CD8-positive, alpha-beta T cell (primary cell): ENCODE measurements at regions of chr9 and their contacts with region 1.

Region 1: DNA sequence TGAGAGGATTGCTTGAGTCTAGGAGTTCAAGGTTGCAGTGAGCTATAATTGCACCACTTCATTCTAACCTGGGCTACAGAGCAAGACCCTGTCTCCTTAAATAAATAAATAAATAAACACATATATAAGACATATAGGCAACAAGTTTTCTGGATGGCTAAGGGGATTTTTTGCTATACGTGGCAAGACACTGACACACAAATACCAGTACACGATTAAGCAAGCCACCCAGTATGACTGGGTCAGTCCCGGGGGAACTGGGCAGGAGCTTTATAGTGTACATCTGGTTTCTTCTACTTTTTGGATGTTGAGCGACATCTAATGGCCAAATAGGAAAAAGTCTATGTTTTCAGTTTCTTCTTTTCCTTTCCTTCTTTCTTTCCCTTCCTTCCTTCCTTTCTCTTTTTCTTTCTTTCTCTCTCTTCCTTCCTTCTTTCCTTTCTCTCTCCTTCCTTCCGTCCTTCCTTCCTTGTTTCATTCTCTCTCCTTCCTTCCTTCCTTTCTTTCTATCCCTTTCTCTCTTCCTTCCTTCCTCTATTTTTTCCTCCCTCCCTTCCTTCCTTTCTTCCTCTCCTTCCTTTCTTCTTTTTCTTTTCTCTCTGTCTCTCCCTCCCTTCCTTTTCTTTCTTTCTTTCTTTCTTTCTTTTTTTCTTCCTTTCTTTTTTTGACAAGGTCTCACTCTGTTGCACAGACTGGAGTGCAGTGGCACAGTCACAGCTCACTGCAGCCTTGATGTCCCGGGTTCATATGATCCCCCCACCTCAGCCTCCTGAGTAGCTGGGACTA is 47.0 kb upstream of the PLIN2 start:
- DNase-seq: peak in 6 of 9 experiments; percentile 8 to 71 (median 46)
- ATAC-seq: peak; percentile 75
- H3K4me3 ChIP-seq: no peak overlapping the region
- H3K4me3 Mint-ChIP-seq: no peak overlapping the region
- H3K27ac ChIP-seq: no peak overlapping the region
- H3K27ac Mint-ChIP-seq: no peak overlapping the region
- H3K4me1 ChIP-seq: peaks cover 25% of the 10 kb centered on the region
- H3K4me1 Mint-ChIP-seq: peaks cover 30% of the 10 kb centered on the region
- H3K27me3 ChIP-seq: no peaks in the 10 kb centered on the region
- H3K27me3 Mint-ChIP-seq: no peaks in the 10 kb centered on the region
- CTCF ChIP-seq: peak; percentile 80

Region 2: GRCh38 chr9:18601956-18602355 is 572.4 kb before region 1 on chr9:
- CTCF ChIA-PET with region 1: no interaction called
- POLR2A ChIA-PET with region 1: no interaction called
- intact Hi-C with region 1: no loop called
- DNase-seq: no peak
- ATAC-seq: no peak
- H3K4me3 ChIP-seq: no peak overlapping the region
- H3K4me3 Mint-ChIP-seq: no peak overlapping the region
- H3K27ac ChIP-seq: no peak overlapping the region
- H3K27ac Mint-ChIP-seq: no peak overlapping the region
- H3K4me1 ChIP-seq: no peaks in the 10 kb centered on the region
- H3K4me1 Mint-ChIP-seq: no peaks in the 10 kb centered on the region
- H3K27me3 ChIP-seq: no peaks in the 10 kb centered on the region
- H3K27me3 Mint-ChIP-seq: no peaks in the 10 kb centered on the region
- CTCF ChIP-seq: no peak

Region 3: GRCh38 chr9:18632632-18633403 is 541.5 kb before region 1 on chr9:
- CTCF ChIA-PET with region 1: no interaction called
- POLR2A ChIA-PET with region 1: no interaction called
- intact Hi-C with region 1: no loop called
- DNase-seq: no peak
- ATAC-seq: no peak
- H3K4me3 ChIP-seq: no peak overlapping the region
- H3K4me3 Mint-ChIP-seq: no peak overlapping the region
- H3K27ac ChIP-seq: no peak overlapping the region
- H3K27ac Mint-ChIP-seq: no peak overlapping the region
- H3K4me1 ChIP-seq: no peaks in the 10 kb centered on the region
- H3K4me1 Mint-ChIP-seq: no peaks in the 10 kb centered on the region
- H3K27me3 ChIP-seq: no peaks in the 10 kb centered on the region
- H3K27me3 Mint-ChIP-seq: peaks cover 4% of the 10 kb centered on the region
- CTCF ChIP-seq: no peak

Region 4: DNA sequence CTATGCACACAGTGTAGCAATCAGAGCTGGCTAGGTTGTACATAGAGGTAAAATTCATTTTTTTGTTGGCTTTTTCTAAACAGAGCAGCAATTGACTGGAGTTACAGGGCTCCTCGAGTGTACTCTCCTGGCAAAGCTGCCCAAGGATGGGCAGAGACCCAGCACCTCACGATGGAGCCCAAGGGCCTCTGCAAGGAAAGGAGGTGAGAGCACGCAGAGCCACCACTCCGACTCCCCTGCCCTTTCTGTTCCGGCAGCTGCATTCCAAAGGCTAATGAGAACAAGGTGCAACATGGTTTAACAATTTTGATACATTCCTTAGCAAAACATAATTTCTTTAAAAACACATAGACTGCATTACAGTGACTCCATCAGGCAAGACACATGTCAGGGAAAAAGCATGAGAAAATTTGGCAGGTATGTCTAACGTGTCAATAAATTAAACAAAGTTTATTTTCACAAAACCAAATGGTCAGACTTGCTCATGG is 188.8 kb before region 1 on chr9:
- CTCF ChIA-PET with region 1: no interaction called
- POLR2A ChIA-PET with region 1: no interaction called
- intact Hi-C with region 1: no loop called
- DNase-seq: no peak
- ATAC-seq: no peak
- H3K4me3 ChIP-seq: no peak overlapping the region
- H3K4me3 Mint-ChIP-seq: no peak overlapping the region
- H3K27ac ChIP-seq: no peak overlapping the region
- H3K27ac Mint-ChIP-seq: no peak overlapping the region
- H3K4me1 ChIP-seq: no peaks in the 10 kb centered on the region
- H3K4me1 Mint-ChIP-seq: no peaks in the 10 kb centered on the region
- H3K27me3 ChIP-seq: no peaks in the 10 kb centered on the region
- H3K27me3 Mint-ChIP-seq: no peaks in the 10 kb centered on the region
- CTCF ChIP-seq: no peak

Region 5: GRCh38 chr9:19048966-19049916 is 125.1 kb before region 1 on chr9 and contains the start of gene RRAGA:
- CTCF ChIA-PET with region 1: interaction called, 14 read pairs
- POLR2A ChIA-PET with region 1: interaction called, 5 read pairs
- intact Hi-C with region 1: loop called in 1 of 2 experiments (anchors 1 kb)
- DNase-seq: peak; percentile 88 to 97 (median 93)
- ATAC-seq: peak; percentile 88
- H3K4me3 ChIP-seq: peak within 1 kb of the TSS; percentile 69 to 89
- H3K4me3 Mint-ChIP-seq: peak within 1 kb of the TSS; percentile 95
- H3K27ac ChIP-seq: peak within 1 kb of the TSS; percentile 80 to 96
- H3K27ac Mint-ChIP-seq: peak within 1 kb of the TSS; percentile 97
- H3K4me1 ChIP-seq: peaks cover 19% of the 10 kb centered on the region
- H3K4me1 Mint-ChIP-seq: peaks cover 40% of the 10 kb centered on the region
- H3K27me3 ChIP-seq: no peaks in the 10 kb centered on the region
- H3K27me3 Mint-ChIP-seq: no peaks in the 10 kb centered on the region
- CTCF ChIP-seq: peak; percentile 56
- total RNA-seq, gene RRAGA: 36.0 to 38.0 TPM

Region 6: GRCh38 chr9:19102631-19103345 is 71.5 kb before region 1 on chr9 and contains the start of gene HAUS6:
- CTCF ChIA-PET with region 1: interaction called, 19 read pairs
- POLR2A ChIA-PET with region 1: no interaction called
- intact Hi-C with region 1: loop called (anchors 1 to 5 kb)
- DNase-seq: peak; percentile 73 to 98 (median 92)
- ATAC-seq: peak; percentile 92
- H3K4me3 ChIP-seq: peak within 1 kb of the TSS; percentile 51 to 71
- H3K4me3 Mint-ChIP-seq: peak within 1 kb of the TSS; percentile 96
- H3K27ac ChIP-seq: peak within 1 kb of the TSS; percentile 58 to 83
- H3K27ac Mint-ChIP-seq: peak within 1 kb of the TSS; percentile 94
- H3K4me1 ChIP-seq: peaks cover 19% of the 10 kb centered on the region
- H3K4me1 Mint-ChIP-seq: peaks cover 29% of the 10 kb centered on the region
- H3K27me3 ChIP-seq: no peaks in the 10 kb centered on the region
- H3K27me3 Mint-ChIP-seq: no peaks in the 10 kb centered on the region
- CTCF ChIP-seq: no peak
- total RNA-seq, gene HAUS6: 14.2 to 16.5 TPM

Region 7: DNA sequence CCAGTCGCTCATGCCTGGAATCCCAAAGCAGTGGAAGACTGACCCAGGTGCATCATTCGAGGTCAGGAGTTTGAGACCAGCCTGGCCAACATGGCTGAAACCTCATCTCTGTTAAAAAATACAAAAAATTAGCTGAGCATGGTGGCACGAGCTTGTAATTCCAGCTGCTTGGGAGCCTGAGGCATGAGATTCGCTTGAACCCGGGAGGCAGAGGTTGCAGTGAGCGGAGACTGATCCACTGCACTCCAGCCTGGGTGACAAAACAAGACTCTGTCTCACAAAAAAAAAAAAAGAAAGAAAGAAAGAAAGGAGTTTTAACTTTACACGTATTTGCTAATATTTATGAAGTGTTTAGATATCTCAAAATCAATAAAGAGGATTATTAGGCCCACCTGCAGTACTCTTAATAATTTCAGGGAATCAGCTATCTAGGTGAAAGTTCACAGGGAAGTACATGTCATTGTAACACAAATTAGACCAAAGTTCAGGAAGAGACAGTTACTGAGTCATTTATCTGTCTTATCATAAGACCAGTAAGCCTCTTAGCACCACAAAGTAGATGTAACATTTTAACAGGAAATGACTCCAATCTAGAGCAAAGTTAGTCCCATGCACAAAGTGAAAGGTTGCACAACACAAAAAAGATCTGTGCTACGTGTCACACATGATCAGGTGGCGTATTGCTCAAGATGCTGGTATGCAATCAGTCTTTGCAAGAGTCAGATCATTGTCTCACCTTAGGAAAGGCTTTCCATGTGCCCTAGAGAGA is 12.9 kb before region 1 on chr9:
- CTCF ChIA-PET with region 1: interaction called, 32 read pairs
- POLR2A ChIA-PET with region 1: no interaction called
- intact Hi-C with region 1: no loop called
- DNase-seq: peak in 7 of 9 experiments; percentile 22 to 85 (median 46)
- ATAC-seq: peak; percentile 96
- H3K4me3 ChIP-seq: no peak overlapping the region
- H3K4me3 Mint-ChIP-seq: peak overlapping the region; percentile 40
- H3K27ac ChIP-seq: peak overlapping the region; percentile 29 to 95
- H3K27ac Mint-ChIP-seq: peak overlapping the region; percentile 81
- H3K4me1 ChIP-seq: peaks cover 16% of the 10 kb centered on the region
- H3K4me1 Mint-ChIP-seq: peaks cover 21% of the 10 kb centered on the region
- H3K27me3 ChIP-seq: no peaks in the 10 kb centered on the region
- H3K27me3 Mint-ChIP-seq: no peaks in the 10 kb centered on the region
- CTCF ChIP-seq: no peak

Region 8: GRCh38 chr9:19456996-19457692 is 282.8 kb after region 1 on chr9:
- CTCF ChIA-PET with region 1: interaction called, 4 read pairs
- POLR2A ChIA-PET with region 1: no interaction called
- intact Hi-C with region 1: loop called (anchors 5 to 10 kb)
- DNase-seq: peak; percentile 10 to 81 (median 59)
- ATAC-seq: peak; percentile 96
- H3K4me3 ChIP-seq: no peak overlapping the region
- H3K4me3 Mint-ChIP-seq: peak overlapping the region; percentile 24
- H3K27ac ChIP-seq: no peak overlapping the region
- H3K27ac Mint-ChIP-seq: no peak overlapping the region
- H3K4me1 ChIP-seq: peaks cover 7% of the 10 kb centered on the region
- H3K4me1 Mint-ChIP-seq: peaks cover 5% of the 10 kb centered on the region
- H3K27me3 ChIP-seq: no peaks in the 10 kb centered on the region
- H3K27me3 Mint-ChIP-seq: peaks cover 5% of the 10 kb centered on the region
- CTCF ChIP-seq: peak; percentile 89